ENCODE measurements at regions of chr1 and their contacts with region 1.

Region 1: GRCh38 chr1:1959840-1960479 is 40.9 kb upstream of the TMEM52 start:
- DNase-seq: peak; percentile 91

Region 2: DNA sequence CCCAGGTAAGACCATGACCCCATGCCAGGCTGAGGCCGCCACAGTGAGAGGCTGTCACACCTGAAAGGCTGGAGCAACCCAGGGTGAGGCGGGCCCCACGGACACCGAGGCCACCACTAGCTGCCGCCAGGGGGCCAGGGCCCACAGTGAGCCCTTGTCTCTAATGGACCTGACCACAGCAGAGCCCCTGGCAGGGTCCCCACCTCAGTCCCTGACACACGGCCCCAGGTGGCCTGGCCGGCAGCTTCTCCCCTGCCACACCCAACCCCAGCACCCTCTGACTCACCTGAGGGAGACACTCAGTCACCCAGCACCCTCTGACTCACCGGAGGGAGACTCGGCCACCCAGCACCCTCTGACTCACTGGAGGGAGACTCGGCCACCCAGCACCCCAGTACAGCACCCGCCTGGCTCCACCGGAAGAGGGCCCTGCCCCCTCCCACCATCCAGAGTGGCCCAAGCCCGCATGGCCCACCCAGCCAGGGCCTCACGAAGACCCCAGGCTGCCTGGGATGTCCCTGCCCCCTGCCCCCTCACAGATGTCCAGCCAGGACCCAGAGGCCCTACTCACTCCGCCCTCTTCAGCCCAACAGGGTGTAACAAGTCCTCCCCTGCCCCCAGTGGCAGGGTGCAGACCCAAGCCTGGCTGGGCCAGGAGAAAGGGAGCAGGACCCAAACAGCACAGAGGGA is 615.1 kb before region 1 on chr1:
- intact Hi-C with region 1: no loop called
- DNase-seq: no peak

Region 3: DNA sequence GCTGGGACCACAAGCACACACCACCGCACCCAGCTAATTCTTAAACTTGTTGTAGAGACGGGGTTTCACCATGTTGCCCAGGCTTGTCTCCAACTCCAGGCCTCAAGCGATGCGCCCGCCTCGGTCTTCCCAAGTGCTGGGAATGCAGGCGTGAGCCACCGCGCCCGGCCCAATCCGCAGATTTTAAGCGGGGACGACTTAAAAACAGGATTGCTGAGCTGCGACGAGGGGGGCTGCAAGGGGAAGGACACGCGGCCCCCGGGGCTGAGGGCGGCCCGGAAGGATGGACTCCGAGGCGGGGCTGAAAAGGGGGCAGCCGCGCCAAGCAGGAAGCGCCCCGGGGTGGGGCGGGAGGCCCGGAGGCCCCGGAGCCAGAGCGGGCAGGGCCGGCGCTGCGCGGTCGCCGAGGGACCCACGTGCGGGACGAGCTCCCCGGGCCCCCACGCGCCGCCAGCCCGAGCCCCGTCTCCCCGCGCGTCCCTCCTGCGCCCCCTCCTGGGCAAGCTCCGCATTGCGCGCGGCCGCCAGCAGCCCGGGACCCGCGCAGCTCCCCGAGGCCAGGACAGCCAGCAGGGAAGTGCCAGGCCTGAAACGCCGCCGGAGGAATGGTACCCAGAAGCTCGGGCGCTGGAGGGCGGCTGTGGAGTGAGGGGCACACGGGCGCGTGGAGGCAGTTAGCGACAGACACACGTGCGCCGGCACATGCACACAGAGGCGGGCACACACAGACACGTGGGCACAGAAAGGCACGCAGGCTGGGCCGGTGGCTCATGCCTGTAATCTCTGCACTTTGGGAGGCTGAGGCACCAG is 84.8 kb after region 1 on chr1:
- intact Hi-C with region 1: loop called (anchors 5 kb)
- DNase-seq: peak; percentile 90